Activated CD8-positive, alpha-beta memory T cell treated with anti-CD3 and anti-CD28 coated beads, Interleukin-2, amount 10 ng/mL, durations not matched to agents 7 days and 5 days (primary cell): ENCODE measurements at regions of chr20 and their contacts with region 1.

Region 1: GRCh38 chr20:52127309-52127708 is 64.3 kb downstream of the ZFP64 start:
- DNase-seq: no peak
- ATAC-seq: no peak
- H3K4me3 Mint-ChIP-seq: no peak overlapping the region
- H3K27ac Mint-ChIP-seq: no peak overlapping the region
- H3K4me1 Mint-ChIP-seq: peaks cover 4% of the 10 kb centered on the region
- H3K27me3 Mint-ChIP-seq: peaks cover 2% of the 10 kb centered on the region

Region 2: GRCh38 chr20:52145587-52145986 is 18.3 kb after region 1 on chr20:
- CTCF ChIA-PET with region 1: interaction called, 13 read pairs
- DNase-seq: no peak
- ATAC-seq: no peak
- H3K4me3 Mint-ChIP-seq: no peak overlapping the region
- H3K27ac Mint-ChIP-seq: no peak overlapping the region
- H3K4me1 Mint-ChIP-seq: no peaks in the 10 kb centered on the region
- H3K27me3 Mint-ChIP-seq: no peaks in the 10 kb centered on the region

Region 3: DNA sequence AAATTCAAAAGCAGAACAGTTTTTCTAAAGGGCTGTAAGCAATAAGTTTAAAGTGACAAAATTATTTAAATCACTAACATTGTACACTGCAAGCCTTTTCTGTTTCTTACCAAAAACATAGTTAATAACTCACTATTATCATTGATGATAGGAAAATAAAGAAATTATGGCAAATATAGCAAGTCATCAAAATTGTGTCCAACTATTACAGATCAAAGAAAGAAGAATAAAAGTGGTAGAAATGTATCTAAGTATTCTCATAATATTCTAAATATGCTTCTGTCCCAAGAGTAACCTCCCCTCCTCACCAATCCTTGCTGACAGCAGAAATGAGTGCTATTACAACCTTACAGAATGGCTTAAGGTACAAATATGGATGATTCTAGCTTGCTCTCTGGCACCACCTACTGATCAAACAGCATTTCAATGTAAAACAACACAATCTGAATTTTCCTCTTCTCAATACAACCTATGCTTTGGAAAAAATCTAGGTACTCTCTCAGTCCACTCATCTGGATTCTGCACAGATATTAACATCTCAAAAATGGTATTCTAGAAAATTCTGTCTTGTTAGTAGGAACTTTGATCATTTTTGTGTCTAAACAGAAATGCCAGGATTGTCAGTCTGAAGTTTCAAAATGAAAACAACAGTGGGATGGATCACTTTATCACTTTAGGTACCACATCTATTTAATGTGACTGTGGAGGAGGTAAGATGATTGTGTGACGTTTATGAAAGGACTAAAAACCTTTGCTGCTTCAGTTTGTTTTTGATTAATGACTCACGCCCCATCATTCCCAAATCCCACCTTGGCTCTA is 23.3 kb after region 1 on chr20:
- CTCF ChIA-PET with region 1: interaction called, 13 read pairs
- DNase-seq: no peak
- ATAC-seq: peak; percentile 36
- H3K4me3 Mint-ChIP-seq: no peak overlapping the region
- H3K27ac Mint-ChIP-seq: no peak overlapping the region
- H3K4me1 Mint-ChIP-seq: no peaks in the 10 kb centered on the region
- H3K27me3 Mint-ChIP-seq: no peaks in the 10 kb centered on the region

Region 4: DNA sequence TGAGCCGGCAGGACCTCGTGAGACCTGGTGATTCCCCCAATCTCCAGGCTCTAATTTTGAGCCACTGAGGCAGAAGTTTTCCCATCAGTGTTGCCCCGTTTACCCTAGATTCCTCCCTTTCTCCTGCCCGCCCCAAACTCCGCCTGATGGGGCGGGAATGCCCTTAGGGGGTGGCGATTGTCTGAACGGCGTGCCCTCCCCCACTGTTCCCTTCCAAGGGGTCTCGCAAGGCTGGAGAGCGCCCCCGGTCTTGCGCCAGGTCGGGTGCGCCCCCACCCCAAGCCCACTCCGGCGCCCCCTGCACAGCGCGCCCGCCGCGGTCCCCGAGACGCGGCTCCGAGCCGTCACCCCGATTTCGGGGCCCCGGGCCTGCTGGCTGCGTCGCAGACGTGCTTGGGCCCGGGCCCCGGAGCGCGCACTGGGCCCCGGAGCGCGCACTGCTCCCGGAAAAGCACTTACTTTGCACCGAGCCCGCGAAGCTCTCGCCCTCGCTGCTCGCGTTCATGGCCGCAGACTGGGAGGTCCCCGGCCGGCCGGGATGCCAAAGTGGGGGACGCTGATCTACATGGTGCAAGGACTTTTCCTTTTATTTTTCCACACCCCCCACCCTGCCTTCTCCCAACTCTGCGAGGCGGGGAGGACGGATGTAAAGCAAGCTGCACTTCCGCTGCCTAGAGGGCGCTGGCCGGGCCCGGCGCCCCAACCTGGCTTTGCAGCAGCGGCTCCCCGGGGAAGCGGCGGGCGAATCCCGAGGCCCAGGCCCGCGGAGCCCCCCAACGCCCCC is 64.0 kb after region 1 on chr20 and contains the start of gene ZFP64:
- CTCF ChIA-PET with region 1: interaction called, 19 read pairs
- DNase-seq: peak; percentile 79
- ATAC-seq: peak; percentile 87
- H3K4me3 Mint-ChIP-seq: peak within 1 kb of the TSS; percentile 91
- H3K27ac Mint-ChIP-seq: peak within 1 kb of the TSS; percentile 91
- H3K4me1 Mint-ChIP-seq: peaks cover 18% of the 10 kb centered on the region
- H3K27me3 Mint-ChIP-seq: no peaks in the 10 kb centered on the region
- total RNA-seq, gene ZFP64: 11.3 to 11.5 TPM

Region 5: GRCh38 chr20:52201395-52201794 is 74.1 kb after region 1 on chr20:
- CTCF ChIA-PET with region 1: no interaction called
- DNase-seq: no peak
- ATAC-seq: no peak
- H3K4me3 Mint-ChIP-seq: no peak overlapping the region
- H3K27ac Mint-ChIP-seq: no peak overlapping the region
- H3K4me1 Mint-ChIP-seq: no peaks in the 10 kb centered on the region
- H3K27me3 Mint-ChIP-seq: no peaks in the 10 kb centered on the region

Region 6: DNA sequence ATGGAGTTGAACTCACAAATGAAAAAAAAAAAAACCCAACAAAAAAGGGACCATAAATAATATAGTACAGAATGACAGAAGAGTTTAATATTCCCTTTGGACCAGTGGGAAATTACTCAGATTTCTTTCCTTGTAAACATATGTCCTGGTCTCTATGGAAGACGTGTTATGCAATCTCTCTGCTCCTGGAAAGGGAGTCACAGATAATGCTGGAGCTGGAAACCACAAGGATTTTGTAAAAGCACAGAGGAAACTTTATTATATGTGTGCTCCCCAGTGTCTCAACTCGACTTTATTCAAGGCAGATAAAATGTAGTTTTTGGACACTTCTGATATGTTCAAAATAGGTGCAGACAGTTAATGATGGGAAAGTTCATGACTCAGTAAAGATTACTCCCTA is 152.4 kb after region 1 on chr20:
- CTCF ChIA-PET with region 1: no interaction called
- DNase-seq: no peak
- ATAC-seq: no peak
- H3K4me3 Mint-ChIP-seq: no peak overlapping the region
- H3K27ac Mint-ChIP-seq: no peak overlapping the region
- H3K4me1 Mint-ChIP-seq: no peaks in the 10 kb centered on the region
- H3K27me3 Mint-ChIP-seq: peaks cover 34% of the 10 kb centered on the region